Activated CD8-positive, alpha-beta T cell treated with anti-CD3 and anti-CD28 coated beads for 36 hours (primary cell): ENCODE measurements at regions of chr19 and their contacts with region 1.

Region 1: DNA sequence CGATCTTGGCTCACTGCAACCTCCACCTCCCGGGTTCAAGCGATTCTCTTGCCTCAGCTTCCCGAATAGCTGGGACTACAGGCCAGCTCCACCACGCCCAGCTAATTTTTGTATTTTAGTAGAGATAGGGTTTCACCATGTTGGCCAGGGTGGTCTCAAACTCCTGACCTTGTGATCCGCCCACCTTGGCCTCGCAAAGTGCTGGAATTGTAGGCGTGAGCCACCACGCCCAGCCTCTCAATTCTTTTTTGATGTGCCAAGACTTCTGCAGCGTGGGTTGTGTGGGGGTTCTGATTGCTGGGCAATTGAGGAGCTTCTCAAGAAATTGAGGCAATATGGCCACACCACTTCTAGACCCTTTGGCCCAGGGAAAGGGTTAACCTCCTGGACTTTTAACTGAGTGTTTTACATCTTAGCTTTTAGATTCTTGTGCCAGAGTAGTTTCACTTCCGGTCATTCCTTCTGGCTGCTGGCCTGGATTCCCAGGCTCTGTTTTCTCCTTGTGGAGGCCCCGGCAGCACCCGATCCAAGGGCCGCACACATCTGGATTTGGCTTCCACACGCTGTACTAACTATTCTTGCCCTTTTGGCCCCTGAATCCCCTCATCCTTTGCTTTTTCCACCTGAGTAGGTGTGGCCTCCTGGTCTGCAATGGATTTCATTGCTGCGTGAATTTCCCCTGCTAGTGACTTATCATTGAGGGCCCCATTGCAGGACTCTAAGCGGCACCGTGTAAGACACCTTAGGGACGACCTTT is 14.7 kb downstream of the SMARCA4 start:
- DNase-seq: no peak
- ATAC-seq: no peak
- H3K4me3 Mint-ChIP-seq: no peak overlapping the region
- H3K27ac Mint-ChIP-seq: no peak overlapping the region
- H3K4me1 Mint-ChIP-seq: peaks cover 44% of the 10 kb centered on the region
- H3K27me3 Mint-ChIP-seq: no peaks in the 10 kb centered on the region
- CTCF ChIP-seq: no peak

Region 2: DNA sequence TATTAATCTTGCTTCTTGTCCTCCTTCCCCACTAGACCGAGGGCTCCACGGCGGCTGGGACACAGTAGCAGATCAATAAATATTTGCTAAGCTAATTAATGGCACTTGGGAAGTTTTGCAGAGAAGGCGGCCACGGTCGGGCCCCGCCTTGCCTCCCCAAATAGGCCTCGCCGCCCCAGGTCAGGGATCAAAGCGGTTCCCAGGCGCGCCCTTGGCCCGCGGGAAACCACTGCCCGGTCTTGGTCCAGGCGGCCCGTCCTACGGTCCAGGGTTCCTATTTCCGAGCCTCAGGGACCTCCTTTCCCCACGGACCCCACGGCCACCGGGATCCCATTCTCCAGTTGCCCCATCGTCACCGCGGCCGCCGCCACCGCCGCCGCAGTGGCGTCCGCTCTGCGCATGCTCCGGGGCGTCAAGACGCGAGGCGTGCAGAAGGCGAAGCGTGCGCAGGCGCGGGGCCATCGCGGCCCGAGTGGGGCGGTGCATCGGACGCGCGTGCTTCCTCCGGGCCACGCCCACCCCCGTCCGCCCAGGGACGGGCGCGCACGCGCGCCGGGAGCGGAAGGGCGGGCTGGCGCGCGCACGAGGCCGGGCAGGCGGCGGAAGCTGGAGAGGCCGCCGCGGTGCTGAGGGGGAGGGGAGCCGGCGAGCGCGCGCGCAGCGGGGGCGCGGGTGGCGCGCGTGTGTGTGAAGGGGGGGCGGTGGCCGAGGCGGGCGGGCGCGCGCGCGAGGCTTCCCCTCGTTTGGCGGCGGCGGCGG is 15.1 kb before region 1 on chr19 and contains the start of gene SMARCA4:
- CTCF ChIA-PET with region 1: no interaction called
- POLR2A ChIA-PET with region 1: interaction called, 12 read pairs
- intact Hi-C with region 1: no loop called
- DNase-seq: peak; percentile 97
- ATAC-seq: peak; percentile 82
- H3K4me3 Mint-ChIP-seq: peak within 1 kb of the TSS; percentile 89
- H3K27ac Mint-ChIP-seq: peak within 1 kb of the TSS; percentile 91
- H3K4me1 Mint-ChIP-seq: peaks cover 34% of the 10 kb centered on the region
- H3K27me3 Mint-ChIP-seq: no peaks in the 10 kb centered on the region
- CTCF ChIP-seq: no peak
- total RNA-seq, gene SMARCA4: 97.0 to 98.7 TPM

Region 3: DNA sequence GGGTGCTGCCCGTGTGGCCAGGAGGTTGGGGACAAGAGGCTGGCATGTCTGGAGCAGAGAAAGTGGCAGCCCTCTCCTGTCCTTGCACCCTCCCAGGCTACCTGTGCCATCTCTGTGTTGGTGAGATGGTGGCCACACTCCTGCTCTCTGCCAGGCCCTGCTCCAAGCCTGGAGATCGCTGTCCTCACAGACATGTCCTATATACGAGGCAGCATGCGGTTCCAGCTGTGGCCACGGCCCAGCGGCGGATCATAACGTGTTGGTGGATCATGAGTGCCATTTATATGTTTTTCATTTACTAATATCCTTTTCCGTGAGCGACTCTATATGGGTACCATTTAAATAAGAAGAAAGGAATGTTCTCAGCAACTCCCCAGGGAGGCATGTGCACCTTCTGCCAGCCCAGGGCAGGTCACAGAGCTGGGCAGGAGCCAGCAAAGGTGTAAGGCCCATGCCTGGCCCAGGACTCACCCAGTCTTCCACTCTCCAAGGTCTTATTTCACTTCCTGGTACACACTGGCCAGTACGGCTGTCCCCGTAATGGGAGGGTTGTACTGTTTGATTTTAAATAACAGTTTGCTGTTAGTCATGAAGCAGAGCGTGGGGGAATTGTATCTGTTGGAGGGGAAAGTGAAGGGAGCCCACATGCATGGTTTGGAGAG is 66.5 kb after region 1 on chr19:
- CTCF ChIA-PET with region 1: no interaction called
- POLR2A ChIA-PET with region 1: no interaction called
- intact Hi-C with region 1: no loop called
- DNase-seq: no peak
- ATAC-seq: no peak
- H3K4me3 Mint-ChIP-seq: no peak overlapping the region
- H3K27ac Mint-ChIP-seq: no peak overlapping the region
- H3K4me1 Mint-ChIP-seq: peaks cover 5% of the 10 kb centered on the region
- H3K27me3 Mint-ChIP-seq: no peaks in the 10 kb centered on the region
- CTCF ChIP-seq: no peak